Posterior vena cava (tissue), 2 donors: ENCODE measurements at regions of chr3 and their contacts with region 1.

Region 1: GRCh38 chr3:32467333-32468070 is 35.1 kb downstream of the CMTM6 start:
- DNase-seq: peak; percentile 93

Region 2: DNA sequence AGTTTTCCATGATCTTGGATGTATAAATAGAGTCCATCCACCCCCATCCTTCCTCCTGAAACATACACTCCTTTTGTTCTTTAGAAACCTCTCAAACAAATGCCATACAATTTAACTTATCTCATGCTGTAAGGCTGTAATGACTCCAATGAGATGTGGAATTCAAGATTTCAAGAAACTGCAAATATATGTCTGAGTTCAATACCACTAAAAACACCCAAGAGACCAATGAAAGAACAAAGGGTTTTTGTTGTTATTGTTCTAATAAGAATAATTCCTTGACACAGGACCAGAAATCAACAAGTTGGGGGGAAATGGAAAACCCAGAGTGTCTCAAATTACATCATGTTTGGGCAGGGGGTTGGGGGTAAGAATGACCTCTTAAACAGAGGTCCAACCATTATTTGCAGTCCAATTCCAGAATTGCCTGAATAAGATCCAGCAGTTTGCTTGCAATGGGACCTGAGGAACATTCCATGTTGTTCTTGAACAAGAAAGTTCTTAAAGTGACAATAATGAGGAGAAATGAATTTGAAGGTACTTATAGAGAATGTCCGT is 1909.7 kb before region 1 on chr3:
- intact Hi-C with region 1: no loop called
- DNase-seq: no peak

Region 3: GRCh38 chr3:32296256-32297204 is 171.0 kb before region 1 on chr3:
- intact Hi-C with region 1: loop called in 1 of 2 experiments (anchors 10 kb)
- DNase-seq: peak; percentile 83

Region 4: DNA sequence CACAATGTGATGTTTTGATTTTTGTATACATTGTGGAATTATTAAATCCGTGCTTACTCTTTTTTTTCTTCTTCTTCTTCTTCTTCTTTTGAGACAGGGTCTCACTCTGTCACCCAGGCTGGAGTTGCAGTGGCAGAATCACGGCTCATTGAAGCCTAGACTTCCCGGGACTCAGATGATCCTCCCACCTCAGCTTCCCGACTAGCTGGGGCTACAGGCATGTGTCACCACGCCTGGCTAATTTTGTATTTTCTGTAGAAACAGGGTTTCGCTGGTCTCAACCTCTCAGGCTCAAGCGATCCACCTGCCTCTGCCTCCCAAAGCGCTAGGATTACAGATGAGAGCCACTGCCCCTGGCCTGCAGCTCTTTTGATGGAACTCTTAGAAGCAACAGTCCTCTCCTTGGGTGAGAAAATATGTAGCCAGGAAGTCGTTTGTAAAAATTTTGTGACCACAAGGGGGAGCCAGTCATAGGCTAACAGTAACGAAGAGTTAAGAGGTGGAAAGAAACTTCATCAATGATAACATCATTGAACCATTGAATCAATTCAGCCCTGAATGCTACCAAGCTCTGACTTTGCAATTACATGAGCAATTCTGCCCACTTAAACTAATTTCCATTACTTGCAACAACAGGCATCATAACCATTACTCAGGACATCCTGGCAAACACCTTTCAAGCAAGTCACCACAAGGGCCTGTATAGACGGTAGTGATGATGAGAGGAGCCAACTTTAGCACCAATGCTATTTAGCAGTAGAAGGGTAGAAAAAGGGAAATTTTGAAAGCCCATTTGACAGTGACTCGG is 92.5 kb before region 1 on chr3:
- intact Hi-C with region 1: loop called (anchors 5 to 10 kb)
- DNase-seq: no peak